ENCODE measurements at regions of chr11 and their contacts with region 1.

Region 1: GRCh38 chr11:76577199-76577920 is 93.2 kb downstream of the LRRC32 start:
- DNase-seq: peak; percentile 86 to 88
- ATAC-seq: no peak
- H3K4me3 ChIP-seq: no peak overlapping the region
- H3K27ac ChIP-seq: peak overlapping the region in 1 of 2 donors; percentile 87
- H3K4me1 ChIP-seq: peaks cover 0 to 4% of the 10 kb centered on the region in 2 donors
- H3K27me3 ChIP-seq: no peaks in the 10 kb centered on the region

Region 2: GRCh38 chr11:76459299-76459698 is 118.1 kb before region 1 on chr11:
- intact Hi-C with region 1: no loop called
- DNase-seq: no peak
- ATAC-seq: no peak
- H3K4me3 ChIP-seq: no peak overlapping the region
- H3K27ac ChIP-seq: no peak overlapping the region
- H3K4me1 ChIP-seq: no peaks in the 10 kb centered on the region
- H3K27me3 ChIP-seq: no peaks in the 10 kb centered on the region

Region 3: GRCh38 chr11:76598426-76598839 is 21.1 kb after region 1 on chr11:
- intact Hi-C with region 1: loop called in 1 of 2 experiments (anchors 1 kb)
- DNase-seq: peak; percentile 62 to 77
- ATAC-seq: peak; percentile 66
- H3K4me3 ChIP-seq: no peak overlapping the region
- H3K27ac ChIP-seq: no peak overlapping the region
- H3K4me1 ChIP-seq: no peaks in the 10 kb centered on the region
- H3K27me3 ChIP-seq: no peaks in the 10 kb centered on the region

Region 4: GRCh38 chr11:76610871-76611475 is 33.6 kb after region 1 on chr11:
- intact Hi-C with region 1: loop called in 1 of 2 experiments (anchors 5 kb)
- DNase-seq: peak; percentile 64 to 70
- ATAC-seq: no peak
- H3K4me3 ChIP-seq: no peak overlapping the region
- H3K27ac ChIP-seq: peak overlapping the region in 1 of 2 donors; percentile 70
- H3K4me1 ChIP-seq: peaks cover 0 to 5% of the 10 kb centered on the region in 2 donors
- H3K27me3 ChIP-seq: no peaks in the 10 kb centered on the region

Region 5: DNA sequence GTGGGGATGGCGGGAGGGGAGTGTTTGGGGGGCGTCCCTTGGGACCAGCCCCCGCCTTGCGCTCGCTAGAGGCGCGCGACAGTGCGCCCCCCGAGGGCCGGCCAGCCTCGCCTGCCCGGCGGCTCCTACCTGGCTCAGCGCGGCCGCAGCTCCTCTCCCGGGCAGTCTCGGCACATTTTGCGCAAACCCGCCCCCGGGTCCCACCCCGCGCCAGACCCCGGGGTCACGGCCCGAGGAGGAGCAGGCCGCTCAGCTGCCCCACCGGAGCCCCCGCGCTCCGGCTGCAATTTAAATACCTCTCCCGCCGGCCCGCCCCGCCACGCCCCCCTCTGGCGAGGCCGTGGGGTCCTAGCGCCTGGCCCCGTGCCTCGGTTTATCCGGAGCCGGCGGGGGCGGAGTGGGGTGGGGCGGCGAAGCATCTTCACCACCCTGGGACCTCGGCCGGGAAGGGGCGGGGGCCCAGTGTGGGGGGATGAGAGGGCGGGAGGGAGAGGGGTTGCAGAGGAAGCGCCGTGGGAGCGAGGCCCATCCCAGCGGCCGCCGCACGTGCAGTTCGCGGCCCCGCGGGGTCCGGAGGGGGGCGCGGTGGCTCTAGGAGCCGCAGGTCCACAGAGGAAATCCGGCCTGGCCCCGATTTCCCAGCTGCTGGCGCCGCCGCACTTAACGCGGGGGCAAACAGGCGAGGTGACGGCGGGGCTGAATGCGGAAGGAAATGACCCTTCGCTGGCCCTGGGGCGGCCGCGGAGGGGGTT is 93.3 kb after region 1 on chr11 and contains the start of gene LRRC32:
- intact Hi-C with region 1: loop called (anchors 5 kb)
- DNase-seq: peak; percentile 84 to 91
- ATAC-seq: peak; percentile 72
- H3K4me3 ChIP-seq: peak within 1 kb of the TSS; percentile 57 to 85
- H3K27ac ChIP-seq: peak within 1 kb of the TSS in 1 of 2 donors; percentile 68
- H3K4me1 ChIP-seq: peaks cover 0 to 2% of the 10 kb centered on the region in 2 donors
- H3K27me3 ChIP-seq: no peaks in the 10 kb centered on the region
- total RNA-seq, gene LRRC32: 130 to 174 TPM

Measured in aorta (tissue), 5 donors.